Activated T-helper 1 cell treated with anti-CD3 and anti-CD28 coated beads, Interleukin-12 subunit alpha, Interleukin-12 subunit beta, Interleukin-2, Interleukin-4 antibody, amounts not matched to agents 30 ng/mL and 10 ng/mL and 1 ng/mL, durations not matched to agents 14 hours and 24 hours and 36 hours (primary cell): ENCODE measurements at regions of chr1 and their contacts with region 1.

Region 1: GRCh38 chr1:88983791-88984559 is 8.5 kb downstream of the KYAT3 start:
- DNase-seq: no peak
- H3K4me3 Mint-ChIP-seq: peak overlapping the region; percentile 31
- H3K27ac Mint-ChIP-seq: peak overlapping the region; percentile 45
- H3K4me1 Mint-ChIP-seq: peaks cover 86% of the 10 kb centered on the region
- H3K27me3 Mint-ChIP-seq: no peaks in the 10 kb centered on the region

Region 2: DNA sequence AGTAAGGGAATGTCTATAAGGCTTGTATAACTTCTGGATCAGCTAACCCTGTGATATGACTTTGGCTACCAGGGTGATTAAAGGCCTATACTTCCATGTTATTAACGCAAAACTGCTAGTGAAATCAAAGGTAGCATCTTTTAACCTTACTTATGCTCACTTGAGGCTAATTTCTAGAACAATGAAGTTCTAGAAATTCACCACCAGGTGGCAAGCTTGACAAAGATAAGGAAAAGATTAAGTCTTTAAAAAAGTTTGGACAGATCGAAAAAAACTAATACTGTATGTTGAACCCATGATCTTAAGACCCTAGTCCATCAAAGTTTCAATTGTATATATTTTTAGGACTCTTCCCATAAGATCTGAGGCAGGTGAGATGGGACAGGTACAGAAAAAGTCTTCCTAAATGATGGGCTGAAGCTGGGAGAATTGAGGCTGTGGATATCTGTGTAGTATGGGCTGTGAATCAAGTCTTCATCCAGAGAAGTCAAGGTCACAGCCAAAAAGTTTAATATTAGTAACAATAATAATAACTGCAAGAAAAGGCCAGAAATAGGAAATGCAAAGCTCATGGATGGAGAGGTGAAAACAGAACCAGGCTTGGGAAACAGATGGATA is 10.3 kb before region 1 on chr1:
- intact Hi-C with region 1: loop called (anchors 1 kb)
- DNase-seq: no peak
- H3K4me3 Mint-ChIP-seq: no peak overlapping the region
- H3K27ac Mint-ChIP-seq: peak overlapping the region; percentile 14
- H3K4me1 Mint-ChIP-seq: peaks cover 20% of the 10 kb centered on the region
- H3K27me3 Mint-ChIP-seq: no peaks in the 10 kb centered on the region

Region 3: GRCh38 chr1:89198491-89199072 is 214.6 kb after region 1 on chr1 and contains the start of gene GBP4:
- intact Hi-C with region 1: loop called (anchors 2 kb)
- DNase-seq: peak; percentile 43
- H3K4me3 Mint-ChIP-seq: peak within 1 kb of the TSS; percentile 93
- H3K27ac Mint-ChIP-seq: peak within 1 kb of the TSS; percentile 93
- H3K4me1 Mint-ChIP-seq: peaks cover 88% of the 10 kb centered on the region
- H3K27me3 Mint-ChIP-seq: no peaks in the 10 kb centered on the region
- total RNA-seq, gene GBP4: 36.8 and 37.5 TPM in 2 replicates

Region 4: GRCh38 chr1:89545264-89546038 is 561.5 kb after region 1 on chr1:
- intact Hi-C with region 1: loop called (anchors 2 kb)
- DNase-seq: peak; percentile 39
- H3K4me3 Mint-ChIP-seq: peak overlapping the region; percentile 12
- H3K27ac Mint-ChIP-seq: peak overlapping the region; percentile 90
- H3K4me1 Mint-ChIP-seq: peaks cover 85% of the 10 kb centered on the region
- H3K27me3 Mint-ChIP-seq: peaks cover 2% of the 10 kb centered on the region